ENCODE measurements at regions of chr3 and their contacts with region 1.

Region 1: GRCh38 chr3:48472915-48473616 is 26.5 kb downstream of the ATRIP start:
- DNase-seq: peak; percentile 96
- ATAC-seq: peak; percentile 90
- H3K4me3 ChIP-seq: peak overlapping the region; percentile 61 to 83 (median 65)
- H3K27ac ChIP-seq: peak overlapping the region; percentile 89
- H3K4me1 ChIP-seq: peaks cover 58% of the 10 kb centered on the region
- H3K27me3 ChIP-seq: no peaks in the 10 kb centered on the region; a peak in 1 of 5 replicates
- CTCF ChIP-seq: peak; percentile 79
- EP300 ChIP-seq: peak in 1 of 2 experiments; percentile 55; a peak in 2 of 4 replicates
- POLR2A ChIP-seq: peak in 1 of 2 experiments; percentile 72; a peak in 1 of 4 replicates
- RAD21 ChIP-seq: peak; percentile 75

Region 2: DNA sequence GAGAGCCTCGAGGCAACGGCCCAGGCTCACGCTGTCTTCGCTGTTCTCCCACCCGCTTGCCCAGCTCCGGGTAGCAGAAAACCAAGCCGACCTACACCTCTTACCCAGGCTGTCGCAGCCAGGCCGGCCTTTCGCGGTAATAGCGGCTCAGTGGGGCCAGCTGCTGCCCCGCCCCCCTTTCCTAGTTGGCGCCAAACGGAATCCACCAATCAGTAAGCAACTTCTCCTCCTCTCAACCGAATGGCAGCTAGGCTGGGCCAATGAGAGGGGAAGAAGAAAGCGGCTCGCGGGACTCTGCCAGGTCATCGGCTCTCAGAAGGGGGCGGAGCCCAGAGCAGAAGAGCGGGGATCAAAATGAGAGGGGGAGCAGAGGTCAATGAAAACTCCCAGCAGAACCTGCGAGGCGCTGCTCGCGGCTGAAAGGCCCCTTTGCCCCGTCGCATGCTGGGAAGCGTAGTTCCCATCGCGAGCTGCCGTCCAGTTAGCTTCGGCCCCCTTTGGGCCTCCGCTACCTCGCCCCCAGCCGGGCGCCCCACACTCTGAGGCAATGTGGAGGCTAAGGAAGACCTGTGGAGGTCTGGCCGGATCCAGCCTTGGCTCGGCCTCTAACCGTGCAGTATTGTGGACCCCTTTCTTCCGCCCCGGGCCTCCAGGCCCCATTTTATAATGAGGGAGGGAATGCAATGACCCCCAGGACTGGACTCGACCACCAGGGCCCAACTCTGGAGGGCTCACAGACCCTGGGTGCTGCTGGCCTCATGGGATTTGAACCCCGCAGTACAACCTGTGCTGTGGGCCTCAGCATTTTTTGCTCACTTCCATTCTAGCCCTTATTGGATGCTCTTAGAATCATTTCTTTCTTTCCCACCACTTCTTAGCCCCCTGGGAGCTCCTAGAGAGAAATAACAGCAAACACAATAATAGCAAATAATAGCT is 284.5 kb before region 1 on chr3 and contains the start of gene CDC25A:
- CTCF ChIA-PET with region 1: no interaction called
- POLR2A ChIA-PET with region 1: interaction called, 10 read pairs
- in situ Hi-C with region 1: no loop called
- intact Hi-C with region 1: no loop called
- DNase-seq: peak; percentile 99
- ATAC-seq: peak; percentile 93
- H3K4me3 ChIP-seq: peak within 1 kb of the TSS; percentile 78 to 91 (median 80)
- H3K27ac ChIP-seq: peak within 1 kb of the TSS; percentile 78
- H3K4me1 ChIP-seq: peaks cover 62% of the 10 kb centered on the region
- H3K27me3 ChIP-seq: no peaks in the 10 kb centered on the region
- CTCF ChIP-seq: peak; percentile 11; the same call in 1 of the 2 replicates
- EP300 ChIP-seq: 0 out of 4 replicates have a peak, but pooled peaks of 1 of the 2 experiments have one; percentile 7
- POLR2A ChIP-seq: peak; percentile 74 to 89
- RAD21 ChIP-seq: peak; percentile 33; the same call in 1 of the 2 replicates
- total RNA-seq, gene CDC25A: 45.4 and 54.7 TPM in 2 replicates

Region 3: GRCh38 chr3:48400824-48401433 is 72.1 kb before region 1 on chr3:
- CTCF ChIA-PET with region 1: no interaction called
- POLR2A ChIA-PET with region 1: no interaction called
- in situ Hi-C with region 1: no loop called
- intact Hi-C with region 1: no loop called
- DNase-seq: peak; percentile 73
- ATAC-seq: peak; percentile 17
- H3K4me3 ChIP-seq: no peak overlapping the region
- H3K27ac ChIP-seq: no peak overlapping the region
- H3K4me1 ChIP-seq: peaks cover 17% of the 10 kb centered on the region
- H3K27me3 ChIP-seq: no peaks in the 10 kb centered on the region
- CTCF ChIP-seq: peak; percentile 85
- EP300 ChIP-seq: no peak
- POLR2A ChIP-seq: 0 out of 4 replicates have a peak, but pooled peaks of 1 of the 2 experiments have one; percentile 1
- RAD21 ChIP-seq: peak; percentile 87

Region 4: GRCh38 chr3:48429317-48429959 is 43.6 kb before region 1 on chr3:
- CTCF ChIA-PET with region 1: no interaction called
- POLR2A ChIA-PET with region 1: interaction called, 18 read pairs
- in situ Hi-C with region 1: no loop called
- intact Hi-C with region 1: no loop called
- DNase-seq: peak; percentile 50
- ATAC-seq: peak; percentile 4
- H3K4me3 ChIP-seq: peak overlapping the region; percentile 79 to 93 (median 86)
- H3K27ac ChIP-seq: peak overlapping the region; percentile 99
- H3K4me1 ChIP-seq: peaks cover 84% of the 10 kb centered on the region
- H3K27me3 ChIP-seq: no peaks in the 10 kb centered on the region
- CTCF ChIP-seq: no peak
- EP300 ChIP-seq: no peak
- POLR2A ChIP-seq: no peak; a peak in 1 of 4 replicates
- RAD21 ChIP-seq: peak; percentile 40

Region 5: DNA sequence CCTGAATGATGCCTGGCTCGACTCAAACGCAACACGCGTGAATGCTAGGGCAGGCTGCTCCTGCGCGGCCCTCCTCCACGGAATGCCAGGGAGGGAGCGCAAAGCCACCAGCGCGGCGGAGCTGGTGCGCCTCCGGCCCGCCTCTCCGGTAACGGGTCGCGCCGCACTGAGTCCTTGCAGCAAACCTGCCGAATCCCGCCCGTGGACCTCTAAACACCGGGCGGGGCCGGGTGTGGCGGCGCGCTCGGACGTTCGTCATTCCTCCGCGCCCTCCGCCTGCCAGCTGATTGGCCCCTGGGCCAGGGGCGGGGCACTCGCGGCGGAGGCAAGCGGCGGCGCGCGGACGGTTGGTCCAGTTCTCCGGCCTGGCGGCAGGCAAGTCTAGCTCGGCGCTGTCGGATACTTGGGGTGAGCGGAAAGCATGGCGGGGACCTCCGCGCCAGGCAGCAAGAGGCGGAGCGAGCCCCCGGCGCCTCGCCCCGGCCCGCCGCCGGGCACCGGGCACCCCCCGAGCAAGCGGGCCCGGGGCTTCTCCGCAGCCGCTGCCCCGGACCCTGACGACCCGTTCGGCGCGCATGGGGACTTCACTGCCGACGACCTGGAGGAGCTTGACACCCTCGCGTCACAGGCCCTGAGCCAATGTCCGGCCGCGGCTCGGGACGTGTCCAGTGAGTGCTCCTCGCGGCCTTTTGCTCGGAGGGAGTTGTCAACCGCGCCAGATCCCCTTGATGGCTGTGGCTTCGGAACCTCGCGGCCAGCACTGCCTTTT is 26.5 kb before region 1 on chr3 and contains the start of gene ATRIP:
- CTCF ChIA-PET with region 1: no interaction called
- POLR2A ChIA-PET with region 1: interaction called, 41 read pairs
- in situ Hi-C with region 1: no loop called
- intact Hi-C with region 1: no loop called
- DNase-seq: peak; percentile 80
- ATAC-seq: peak; percentile 92
- H3K4me3 ChIP-seq: peak within 1 kb of the TSS; percentile 74 to 100 (median 86)
- H3K27ac ChIP-seq: peak within 1 kb of the TSS; percentile 78
- H3K4me1 ChIP-seq: peaks cover 59% of the 10 kb centered on the region
- H3K27me3 ChIP-seq: no peaks in the 10 kb centered on the region; a peak in 1 of 5 replicates
- CTCF ChIP-seq: no peak
- EP300 ChIP-seq: 0 out of 4 replicates have a peak, but pooled peaks of 1 of the 2 experiments have one; percentile 45
- POLR2A ChIP-seq: peak; percentile 91 to 98
- RAD21 ChIP-seq: peak; percentile 69
- total RNA-seq, gene ATRIP: 11.4 and 12.5 TPM in 2 replicates

Region 6: GRCh38 chr3:48486952-48487351 is 13.9 kb after region 1 on chr3:
- CTCF ChIA-PET with region 1: no interaction called
- POLR2A ChIA-PET with region 1: interaction called, 20 read pairs
- in situ Hi-C with region 1: no loop called
- intact Hi-C with region 1: no loop called
- DNase-seq: no peak
- ATAC-seq: no peak
- H3K4me3 ChIP-seq: no peak overlapping the region
- H3K27ac ChIP-seq: no peak overlapping the region
- H3K4me1 ChIP-seq: peaks cover 12% of the 10 kb centered on the region; the same call in 1 of the 2 replicates
- H3K27me3 ChIP-seq: no peaks in the 10 kb centered on the region
- CTCF ChIP-seq: no peak
- EP300 ChIP-seq: no peak
- POLR2A ChIP-seq: no peak
- RAD21 ChIP-seq: no peak

Region 7: GRCh38 chr3:48548729-48549705 is 76.0 kb after region 1 on chr3:
- CTCF ChIA-PET with region 1: no interaction called
- POLR2A ChIA-PET with region 1: interaction called, 10 read pairs
- in situ Hi-C with region 1: no loop called
- intact Hi-C with region 1: no loop called
- DNase-seq: peak; percentile 67
- ATAC-seq: peak; percentile 91
- H3K4me3 ChIP-seq: no peak overlapping the region
- H3K27ac ChIP-seq: no peak overlapping the region
- H3K4me1 ChIP-seq: peaks cover 65% of the 10 kb centered on the region
- H3K27me3 ChIP-seq: no peaks in the 10 kb centered on the region
- CTCF ChIP-seq: peak; percentile 93
- EP300 ChIP-seq: no peak
- POLR2A ChIP-seq: no peak
- RAD21 ChIP-seq: peak; percentile 83

Region 8: DNA sequence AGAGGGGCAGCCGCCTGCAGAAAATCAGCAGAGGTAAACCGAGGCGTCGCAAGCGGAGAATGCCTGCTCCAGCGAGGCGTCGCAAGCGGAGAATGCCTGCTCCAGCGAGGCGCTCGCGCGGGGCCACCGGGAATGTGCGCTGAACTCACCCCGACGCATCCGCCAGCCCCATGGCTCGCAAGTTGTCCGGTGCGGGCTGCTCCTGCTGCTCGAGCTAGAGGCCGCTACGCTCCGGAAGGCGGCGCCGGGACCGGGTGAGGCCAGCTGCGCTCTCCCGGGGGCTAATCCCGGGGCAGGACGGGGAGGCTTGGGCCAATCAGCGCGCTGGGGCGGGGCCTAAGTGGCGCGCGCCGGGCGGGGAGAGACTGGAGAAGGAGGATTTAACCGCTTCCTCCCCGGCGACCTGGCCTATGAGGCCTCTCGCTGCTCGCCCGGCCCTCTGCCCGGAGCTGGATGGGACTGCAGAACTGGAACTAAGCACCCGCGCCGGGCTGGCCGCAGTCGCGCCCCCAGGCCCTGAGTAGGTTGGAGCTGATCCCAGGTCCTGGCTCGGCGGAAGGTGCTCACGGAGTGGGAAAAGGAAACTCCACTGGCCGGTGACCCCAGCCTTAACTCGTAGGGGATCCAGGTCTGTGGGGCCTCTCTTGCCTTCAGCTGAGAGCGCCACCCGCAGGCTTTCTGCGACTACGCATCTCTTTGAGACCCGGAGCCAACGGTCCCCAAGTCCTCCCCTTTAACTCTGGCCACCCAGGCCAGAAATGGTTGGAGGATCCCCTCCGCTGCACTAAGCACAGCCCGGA is 162.4 kb after region 1 on chr3 and contains the start of gene SLC26A6:
- CTCF ChIA-PET with region 1: no interaction called
- POLR2A ChIA-PET with region 1: interaction called, 24 read pairs
- in situ Hi-C with region 1: no loop called
- intact Hi-C with region 1: no loop called
- DNase-seq: peak; percentile 93
- ATAC-seq: peak; percentile 91
- H3K4me3 ChIP-seq: peak within 1 kb of the TSS; percentile 71 to 96 (median 93)
- H3K27ac ChIP-seq: peak within 1 kb of the TSS; percentile 74
- H3K4me1 ChIP-seq: peaks cover 64% of the 10 kb centered on the region
- H3K27me3 ChIP-seq: no peaks in the 10 kb centered on the region; a peak in 1 of 5 replicates
- CTCF ChIP-seq: peak; percentile 85
- EP300 ChIP-seq: peak in 1 of 2 experiments; percentile 8; a peak in 1 of 4 replicates
- POLR2A ChIP-seq: peak in 1 of 2 experiments; percentile 83; a peak in 2 of 4 replicates
- RAD21 ChIP-seq: peak; percentile 77
- total RNA-seq, gene SLC26A6: 10.3 and 40.7 TPM in 2 replicates

Region 9: GRCh38 chr3:49493901-49494300 is 1020.8 kb after region 1 on chr3:
- CTCF ChIA-PET with region 1: no interaction called
- POLR2A ChIA-PET with region 1: no interaction called
- in situ Hi-C with region 1: no loop called
- intact Hi-C with region 1: no loop called
- DNase-seq: no peak
- ATAC-seq: no peak
- H3K4me3 ChIP-seq: no peak overlapping the region
- H3K27ac ChIP-seq: no peak overlapping the region
- H3K4me1 ChIP-seq: peaks cover 19% of the 10 kb centered on the region
- H3K27me3 ChIP-seq: no peaks in the 10 kb centered on the region
- CTCF ChIP-seq: no peak
- EP300 ChIP-seq: no peak
- POLR2A ChIP-seq: no peak
- RAD21 ChIP-seq: no peak

Measured in HepG2 (cell line).